Ovary (tissue), 10 donors: ENCODE measurements at regions of chr12 and their contacts with region 1.

Region 1: DNA sequence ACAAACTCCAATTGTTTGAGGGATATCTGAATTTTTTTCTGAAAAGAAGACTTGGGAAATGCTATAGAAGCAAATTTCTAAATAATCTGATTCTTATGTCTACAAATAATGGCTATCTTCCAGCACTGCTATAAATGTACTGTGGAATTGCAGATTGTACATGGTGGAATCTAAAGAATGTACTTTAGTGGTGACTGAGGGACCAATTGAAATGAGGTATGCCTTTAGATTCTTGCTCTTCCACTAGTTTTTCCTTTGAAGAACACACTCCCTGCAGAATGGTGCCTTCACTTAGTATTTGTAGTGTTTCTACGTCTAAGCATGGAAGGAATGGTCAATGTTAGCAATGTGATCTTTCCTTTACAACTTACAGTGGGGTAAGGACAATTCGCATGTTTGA is 11.7 kb upstream of the PRB4 start:
- DNase-seq: no peak
- H3K4me3 ChIP-seq: no peak overlapping the region
- H3K27ac ChIP-seq: no peak overlapping the region
- H3K4me1 ChIP-seq: no peaks in the 10 kb centered on the region
- H3K27me3 ChIP-seq: no peaks in the 10 kb centered on the region
- CTCF ChIP-seq: no peak
- EP300 ChIP-seq: no peak
- POLR2A ChIP-seq: no peak

Region 2: GRCh38 chr12:10810068-10810467 is 511.9 kb before region 1 on chr12 and contains the start of gene TAS2R9:
- intact Hi-C with region 1: loop called in 1 of 4 experiments (anchors 10 kb)
- DNase-seq: no peak
- H3K4me3 ChIP-seq: no peak within 1 kb of the TSS
- H3K27ac ChIP-seq: no peak within 1 kb of the TSS
- H3K4me1 ChIP-seq: no peaks in the 10 kb centered on the region
- H3K27me3 ChIP-seq: no peaks in the 10 kb centered on the region
- CTCF ChIP-seq: no peak
- EP300 ChIP-seq: no peak
- POLR2A ChIP-seq: no peak
- total RNA-seq, gene TAS2R9: 0.22 TPM in 1 of 7 donors, not detected in the others

Region 3: DNA sequence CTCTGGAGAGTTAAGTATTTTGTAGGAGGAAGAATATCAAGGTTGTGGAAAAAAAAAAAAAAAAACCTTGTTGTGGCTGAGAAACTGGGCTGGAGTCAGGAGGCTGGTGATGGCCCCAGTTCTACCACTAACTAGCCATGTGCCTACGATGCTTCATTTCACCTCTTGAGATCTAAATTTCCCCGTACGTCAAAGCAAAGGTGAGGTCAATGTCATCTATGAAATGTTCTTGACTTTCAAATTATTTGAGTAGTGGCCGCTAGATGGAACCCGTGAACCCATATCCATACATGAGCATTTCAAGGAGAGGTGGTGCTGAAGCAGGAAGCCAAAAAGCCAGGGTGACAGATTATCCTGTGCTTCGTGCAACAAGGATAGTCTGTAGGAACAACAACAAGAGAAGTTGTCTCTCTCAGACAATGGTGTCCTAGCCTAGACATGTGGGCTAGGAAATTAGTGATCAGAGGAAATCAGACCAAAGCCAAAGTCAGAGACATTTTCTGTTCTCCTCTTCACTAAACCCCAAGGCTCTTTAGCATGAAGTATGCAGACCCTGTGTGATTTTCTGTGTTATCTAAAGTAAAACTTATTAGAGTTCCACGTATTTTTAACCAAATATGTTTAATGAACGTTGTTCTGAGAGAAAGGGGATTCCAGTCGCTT is 232.0 kb after region 1 on chr12:
- intact Hi-C with region 1: no loop called
- DNase-seq: peak in 1 of 5 donors; percentile 29
- H3K4me3 ChIP-seq: no peak overlapping the region
- H3K27ac ChIP-seq: no peak overlapping the region
- H3K4me1 ChIP-seq: peaks cover 3% of the 10 kb centered on the region
- H3K27me3 ChIP-seq: no peaks in the 10 kb centered on the region
- CTCF ChIP-seq: peak in 2 of 3 donors; percentile 25 to 31
- EP300 ChIP-seq: no peak
- POLR2A ChIP-seq: no peak

Region 4: GRCh38 chr12:11822081-11822834 is 500.3 kb after region 1 on chr12:
- intact Hi-C with region 1: no loop called
- DNase-seq: no peak
- H3K4me3 ChIP-seq: no peak overlapping the region
- H3K27ac ChIP-seq: no peak overlapping the region
- H3K4me1 ChIP-seq: peaks cover 4% of the 10 kb centered on the region
- H3K27me3 ChIP-seq: no peaks in the 10 kb centered on the region
- CTCF ChIP-seq: no peak
- EP300 ChIP-seq: no peak
- POLR2A ChIP-seq: no peak

Region 5: GRCh38 chr12:11885261-11886038 is 563.5 kb after region 1 on chr12:
- intact Hi-C with region 1: no loop called
- DNase-seq: no peak
- H3K4me3 ChIP-seq: no peak overlapping the region
- H3K27ac ChIP-seq: no peak overlapping the region
- H3K4me1 ChIP-seq: no peaks in the 10 kb centered on the region
- H3K27me3 ChIP-seq: no peaks in the 10 kb centered on the region
- CTCF ChIP-seq: no peak
- EP300 ChIP-seq: no peak
- POLR2A ChIP-seq: no peak